Right ventricle myocardium superior (tissue), 1 donor: ENCODE measurements at regions of chr7 and their contacts with region 1.

Region 1: GRCh38 chr7:88111136-88111743 is 108.6 kb downstream of the SRI start:
- DNase-seq: no peak
- ATAC-seq: peak; percentile 53

Region 2: GRCh38 chr7:87797798-87798403 is 313.3 kb before region 1 on chr7:
- intact Hi-C with region 1: loop called (anchors 10 kb)
- DNase-seq: no peak
- ATAC-seq: peak; percentile 53

Region 3: GRCh38 chr7:87944531-87944930 is 166.7 kb before region 1 on chr7:
- intact Hi-C with region 1: no loop called
- DNase-seq: no peak
- ATAC-seq: no peak

Region 4: GRCh38 chr7:88442413-88442812 is 331.2 kb after region 1 on chr7:
- intact Hi-C with region 1: no loop called
- DNase-seq: no peak
- ATAC-seq: no peak